HepG2 (cell line): ENCODE measurements at regions of chr19 and their contacts with region 1.

Region 1: DNA sequence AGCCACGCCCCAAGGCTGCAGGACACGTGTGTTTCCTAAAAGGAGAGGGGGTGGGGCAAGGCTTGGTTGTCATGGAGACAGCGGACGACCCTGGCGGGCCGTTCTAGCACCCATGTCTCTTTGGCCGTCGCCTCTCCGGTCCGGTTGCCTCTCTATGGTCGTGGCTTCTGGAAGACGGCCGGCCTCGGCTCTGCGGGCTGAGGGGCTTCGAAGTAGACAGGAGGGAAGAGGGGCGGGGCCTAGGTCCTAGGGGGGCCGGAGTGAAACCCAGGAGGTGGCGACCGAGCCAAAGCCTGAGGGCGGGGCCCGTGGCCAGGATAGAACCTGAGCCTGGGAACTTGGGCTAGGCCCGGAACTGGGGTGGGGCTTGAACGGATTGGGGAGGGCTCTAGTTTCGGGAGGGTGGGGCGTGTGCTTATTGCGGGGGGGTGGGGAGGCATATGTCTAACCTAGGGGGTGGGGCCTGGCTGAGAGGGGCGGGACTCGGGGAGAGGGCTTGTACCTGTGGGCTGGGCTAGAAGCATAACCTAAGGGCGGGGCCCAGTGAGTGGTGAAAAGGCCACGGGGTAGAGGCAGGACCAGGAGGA is 750 bp upstream of the SLC27A1 start:
- DNase-seq: peak; percentile 87
- ATAC-seq: peak; percentile 75
- H3K4me3 ChIP-seq: peak overlapping the region; percentile 71 to 85 (median 71)
- H3K27ac ChIP-seq: peak overlapping the region; percentile 69
- H3K4me1 ChIP-seq: peaks cover 57% of the 10 kb centered on the region
- H3K27me3 ChIP-seq: peaks cover 0 to 10% of the 10 kb centered on the region in 2 experiments; a peak in 2 of 5 replicates
- CTCF ChIP-seq: peak; percentile 7; the same call in 1 of the 2 replicates
- EP300 ChIP-seq: no peak
- POLR2A ChIP-seq: no peak
- RAD21 ChIP-seq: no peak

Region 2: DNA sequence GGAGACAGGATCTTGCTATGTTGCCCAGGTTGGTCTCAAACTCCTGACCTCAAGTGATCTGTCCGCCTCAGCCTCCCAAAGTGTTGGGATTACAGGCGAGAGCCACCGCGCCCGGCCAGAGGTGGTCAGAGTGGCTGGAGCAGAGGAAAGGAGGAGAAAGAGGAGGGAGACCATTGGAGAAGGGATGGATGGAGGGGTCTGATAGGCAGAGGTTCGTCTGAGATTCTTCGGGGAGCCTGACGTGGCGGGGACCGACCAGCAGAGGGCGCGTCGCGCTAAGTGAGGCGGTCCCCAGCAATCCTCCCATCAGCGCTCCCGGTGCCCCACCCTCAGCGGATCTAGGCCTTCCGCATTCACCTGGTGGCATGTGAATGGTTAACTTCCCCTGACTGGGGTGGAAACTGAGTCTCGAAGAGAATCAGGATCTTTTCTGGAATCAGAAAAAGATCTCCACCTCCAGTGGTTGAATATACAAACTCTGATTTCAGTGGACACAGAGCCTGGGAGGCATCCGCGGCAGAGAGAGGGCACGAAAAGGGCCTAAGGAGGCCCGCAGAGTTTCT is 123.4 kb before region 1 on chr19:
- CTCF ChIA-PET with region 1: no interaction called
- POLR2A ChIA-PET with region 1: no interaction called
- in situ Hi-C with region 1: no loop called
- intact Hi-C with region 1: loop called (anchors 10 kb)
- DNase-seq: peak; percentile 39
- ATAC-seq: peak; percentile 90
- H3K4me3 ChIP-seq: no peak overlapping the region
- H3K27ac ChIP-seq: no peak overlapping the region
- H3K4me1 ChIP-seq: peaks cover 32% of the 10 kb centered on the region
- H3K27me3 ChIP-seq: peaks cover 1 to 13% of the 10 kb centered on the region in 2 experiments; a peak in 3 of 5 replicates
- CTCF ChIP-seq: peak; percentile 96
- EP300 ChIP-seq: no peak
- POLR2A ChIP-seq: no peak
- RAD21 ChIP-seq: peak; percentile 81

Region 3: DNA sequence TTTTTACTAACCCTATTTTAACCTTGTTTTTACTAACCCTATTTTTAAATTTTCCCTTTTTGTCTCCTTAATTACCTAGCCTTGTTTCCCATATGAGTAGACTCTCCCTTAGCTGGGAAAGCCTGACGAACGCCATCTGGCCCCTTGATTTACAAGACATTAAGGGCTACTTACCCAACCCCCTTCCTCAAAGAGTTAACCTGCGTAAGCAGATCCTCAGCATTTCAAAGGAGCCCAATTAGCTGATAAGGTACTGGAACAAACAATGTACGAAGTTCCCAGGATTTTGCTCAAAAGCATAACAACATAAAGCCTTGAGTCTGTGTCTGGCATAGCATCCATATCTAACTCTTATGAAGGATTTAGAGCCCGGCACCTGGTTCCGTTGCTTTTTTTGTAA is 54.5 kb before region 1 on chr19:
- CTCF ChIA-PET with region 1: no interaction called
- POLR2A ChIA-PET with region 1: no interaction called
- in situ Hi-C with region 1: no loop called
- intact Hi-C with region 1: no loop called
- DNase-seq: no peak
- ATAC-seq: no peak
- H3K4me3 ChIP-seq: no peak overlapping the region
- H3K27ac ChIP-seq: no peak overlapping the region
- H3K4me1 ChIP-seq: peaks cover 9% of the 10 kb centered on the region
- H3K27me3 ChIP-seq: no peaks in the 10 kb centered on the region
- CTCF ChIP-seq: no peak
- EP300 ChIP-seq: no peak
- POLR2A ChIP-seq: no peak
- RAD21 ChIP-seq: no peak

Region 4: GRCh38 chr19:17448131-17448967 is 21.2 kb before region 1 on chr19 and contains the start of gene TMEM221:
- CTCF ChIA-PET with region 1: interaction called, 18 read pairs
- POLR2A ChIA-PET with region 1: no interaction called
- in situ Hi-C with region 1: no loop called
- intact Hi-C with region 1: loop called (anchors 1 kb)
- DNase-seq: no peak
- ATAC-seq: peak; percentile 90
- H3K4me3 ChIP-seq: peak within 1 kb of the TSS; percentile 66 to 69 (median 67); a peak in 4 of 6 replicates
- H3K27ac ChIP-seq: no peak within 1 kb of the TSS
- H3K4me1 ChIP-seq: 0 out of 2 replicates have a peak, but pooled peaks cover 7% of the 10 kb centered on the region
- H3K27me3 ChIP-seq: no peaks in the 10 kb centered on the region; a peak in 1 of 5 replicates
- CTCF ChIP-seq: peak; percentile 57
- EP300 ChIP-seq: 0 out of 4 replicates have a peak, but pooled peaks of 1 of the 2 experiments have one; percentile 4
- POLR2A ChIP-seq: no peak
- RAD21 ChIP-seq: no peak
- total RNA-seq, gene TMEM221: 0.55 and 0.77 TPM in 2 replicates

Region 5: GRCh38 chr19:17454576-17455071 is 14.9 kb before region 1 on chr19:
- CTCF ChIA-PET with region 1: interaction called, 18 read pairs
- POLR2A ChIA-PET with region 1: no interaction called
- in situ Hi-C with region 1: no loop called
- intact Hi-C with region 1: no loop called
- DNase-seq: no peak
- ATAC-seq: no peak; the same call in 2 of the 3 replicates
- H3K4me3 ChIP-seq: no peak overlapping the region
- H3K27ac ChIP-seq: no peak overlapping the region
- H3K4me1 ChIP-seq: no peaks in the 10 kb centered on the region
- H3K27me3 ChIP-seq: peaks cover 4 to 19% of the 10 kb centered on the region in 2 experiments; a peak in 4 of 5 replicates
- CTCF ChIP-seq: no peak
- EP300 ChIP-seq: no peak
- POLR2A ChIP-seq: no peak
- RAD21 ChIP-seq: no peak